ENCODE measurements at regions of chr7 and their contacts with region 1.

Region 1: GRCh38 chr7:92833024-92833765 is 3.2 kb downstream of the CDK6 start:
- DNase-seq: peak; percentile 58 to 90
- ATAC-seq: peak; percentile 72 to 82
- H3K4me3 ChIP-seq: peak overlapping the region; percentile 80
- H3K27ac ChIP-seq: peak overlapping the region; percentile 92 to 96
- H3K4me1 ChIP-seq: peaks cover 33% of the 10 kb centered on the region
- CTCF ChIP-seq: peak; percentile 80
- EP300 ChIP-seq: no peak
- POLR2A ChIP-seq: no peak
- RAD21 ChIP-seq: peak; percentile 82 to 92

Region 2: DNA sequence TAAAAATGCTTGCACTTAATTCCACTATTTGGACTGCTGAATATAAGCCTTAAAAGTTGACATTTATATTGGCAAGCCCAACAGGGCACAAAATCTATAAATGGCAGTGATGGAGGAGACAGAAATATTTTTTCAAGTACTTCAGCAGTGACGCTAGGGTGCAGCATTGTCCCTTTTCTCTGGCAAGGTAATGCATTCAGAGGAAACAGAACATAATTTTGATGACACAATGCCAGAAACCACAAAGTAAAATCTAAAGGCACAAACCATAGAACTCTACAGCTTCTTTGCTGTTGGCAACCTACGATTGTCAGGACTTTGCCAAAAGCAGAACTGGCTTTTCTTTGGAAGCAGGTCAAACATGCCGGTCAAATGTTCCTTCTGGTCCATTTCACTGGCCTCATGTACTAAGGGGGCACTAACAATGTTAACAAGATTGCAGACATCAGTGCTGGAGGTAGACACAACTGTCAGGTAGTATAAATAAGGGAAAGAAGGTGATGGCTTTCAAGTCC is 212.1 kb before region 1 on chr7:
- CTCF ChIA-PET with region 1: interaction called, 62 read pairs
- POLR2A ChIA-PET with region 1: no interaction called
- DNase-seq: peak; percentile 36 to 85
- ATAC-seq: peak; percentile 87 to 92
- H3K4me3 ChIP-seq: no peak overlapping the region
- H3K27ac ChIP-seq: peak overlapping the region; percentile 50 to 78
- H3K4me1 ChIP-seq: peaks cover 28% of the 10 kb centered on the region
- CTCF ChIP-seq: peak; percentile 84
- EP300 ChIP-seq: no peak
- POLR2A ChIP-seq: no peak
- RAD21 ChIP-seq: peak; percentile 94 to 95

Region 3: GRCh38 chr7:92691578-92691977 is 141.6 kb before region 1 on chr7:
- CTCF ChIA-PET with region 1: interaction called, 74 read pairs
- POLR2A ChIA-PET with region 1: interaction called, 24 read pairs
- DNase-seq: peak; percentile 38 to 69
- ATAC-seq: peak; percentile 60 to 74; a peak in 4 of 6 replicates
- H3K4me3 ChIP-seq: no peak overlapping the region
- H3K27ac ChIP-seq: peak overlapping the region; percentile 54 to 78
- H3K4me1 ChIP-seq: peaks cover 32% of the 10 kb centered on the region
- CTCF ChIP-seq: peak; percentile 72
- EP300 ChIP-seq: no peak
- POLR2A ChIP-seq: no peak
- RAD21 ChIP-seq: peak; percentile 77 to 81

Region 4: DNA sequence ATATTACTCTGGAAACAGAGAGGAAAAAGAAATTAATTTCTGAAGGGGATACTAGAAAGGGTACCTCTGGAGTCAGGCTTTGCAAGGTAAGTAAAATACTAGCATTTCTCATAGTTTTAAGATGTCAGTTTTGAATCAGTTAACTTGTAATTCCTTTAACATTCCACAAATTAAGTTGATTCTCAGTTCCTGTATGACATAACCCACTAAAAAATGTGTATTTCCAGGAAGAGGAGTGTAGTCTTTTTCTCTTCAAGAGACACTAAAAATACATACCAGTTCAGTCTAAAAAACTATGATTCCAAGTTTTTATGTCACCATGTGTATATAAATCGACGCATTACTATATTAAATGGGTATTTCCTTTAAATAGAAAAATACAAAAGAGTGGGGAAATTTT is 110.0 kb before region 1 on chr7:
- CTCF ChIA-PET with region 1: interaction called, 12 read pairs
- POLR2A ChIA-PET with region 1: no interaction called
- DNase-seq: no peak
- ATAC-seq: no peak
- H3K4me3 ChIP-seq: no peak overlapping the region
- H3K27ac ChIP-seq: peak overlapping the region in 1 of 2 experiments; percentile 67; a peak in 3 of 6 replicates
- H3K4me1 ChIP-seq: peaks cover 29% of the 10 kb centered on the region
- CTCF ChIP-seq: no peak
- EP300 ChIP-seq: no peak
- POLR2A ChIP-seq: no peak
- RAD21 ChIP-seq: no peak

Region 5: DNA sequence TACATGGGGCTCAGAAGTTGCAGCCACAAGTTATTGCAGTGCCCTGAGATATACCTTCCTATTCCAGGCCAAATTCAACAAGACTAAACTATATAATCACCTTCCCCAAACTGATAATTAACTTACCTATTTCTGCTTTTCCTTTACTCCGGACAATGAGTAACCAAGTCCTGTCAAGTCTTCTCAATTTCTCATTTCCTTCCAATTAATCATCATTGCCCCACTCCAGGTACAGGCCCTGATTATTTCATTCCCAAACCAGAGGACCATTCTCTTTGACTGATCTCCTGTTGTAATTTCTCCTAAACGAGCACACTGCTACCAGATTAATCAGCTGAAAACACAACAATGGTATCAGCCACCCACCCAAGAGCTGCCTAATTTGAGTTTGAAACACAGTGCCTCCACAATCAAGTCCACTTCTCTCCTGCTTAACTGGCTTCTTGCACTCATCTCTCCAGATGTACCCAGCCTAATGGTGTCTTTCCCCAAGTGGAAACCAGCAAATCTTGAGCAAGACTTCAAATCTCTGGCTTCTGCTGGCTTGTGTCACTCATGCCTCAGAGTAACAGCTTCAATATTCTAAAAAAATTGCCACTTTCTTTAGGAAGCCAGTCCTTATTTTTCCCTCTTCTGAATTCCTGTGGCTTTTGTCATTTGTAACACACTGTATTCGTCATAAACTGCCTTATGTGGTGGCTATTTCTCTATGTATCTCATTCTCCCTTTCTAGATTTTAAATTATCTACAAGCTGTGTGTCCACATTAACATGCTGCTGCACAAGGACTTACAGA is 86.0 kb before region 1 on chr7:
- CTCF ChIA-PET with region 1: interaction called, 20 read pairs
- POLR2A ChIA-PET with region 1: interaction called, 3 read pairs
- DNase-seq: no peak
- ATAC-seq: no peak
- H3K4me3 ChIP-seq: no peak overlapping the region
- H3K27ac ChIP-seq: peak overlapping the region; percentile 88 to 89
- H3K4me1 ChIP-seq: peaks cover 68% of the 10 kb centered on the region
- CTCF ChIP-seq: no peak
- EP300 ChIP-seq: no peak
- POLR2A ChIP-seq: no peak
- RAD21 ChIP-seq: no peak

Region 6: GRCh38 chr7:92768501-92769393 is 64.4 kb before region 1 on chr7:
- CTCF ChIA-PET with region 1: interaction called, 39 read pairs
- POLR2A ChIA-PET with region 1: interaction called, 12 read pairs
- DNase-seq: no peak
- ATAC-seq: peak in 1 of 2 experiments; percentile 10; a peak in 1 of 6 replicates
- H3K4me3 ChIP-seq: no peak overlapping the region
- H3K27ac ChIP-seq: peak overlapping the region; percentile 82 to 84
- H3K4me1 ChIP-seq: peaks cover 85% of the 10 kb centered on the region
- CTCF ChIP-seq: no peak
- EP300 ChIP-seq: no peak
- POLR2A ChIP-seq: no peak
- RAD21 ChIP-seq: no peak

Region 7: GRCh38 chr7:92843034-92843760 is 10.0 kb after region 1 on chr7:
- CTCF ChIA-PET with region 1: interaction called, 13 read pairs
- POLR2A ChIA-PET with region 1: no interaction called
- DNase-seq: no peak
- ATAC-seq: no peak
- H3K4me3 ChIP-seq: no peak overlapping the region
- H3K27ac ChIP-seq: no peak overlapping the region
- H3K4me1 ChIP-seq: no peaks in the 10 kb centered on the region
- CTCF ChIP-seq: no peak
- EP300 ChIP-seq: no peak
- POLR2A ChIP-seq: no peak
- RAD21 ChIP-seq: no peak

Region 8: GRCh38 chr7:92953657-92954056 is 120.5 kb after region 1 on chr7:
- CTCF ChIA-PET with region 1: no interaction called
- POLR2A ChIA-PET with region 1: no interaction called
- DNase-seq: peak in 1 of 2 experiments; percentile 13
- ATAC-seq: peak; percentile 23 to 56; a peak in 2 of 6 replicates
- H3K4me3 ChIP-seq: no peak overlapping the region
- H3K27ac ChIP-seq: no peak overlapping the region
- H3K4me1 ChIP-seq: no peaks in the 10 kb centered on the region
- CTCF ChIP-seq: no peak
- EP300 ChIP-seq: no peak
- POLR2A ChIP-seq: no peak
- RAD21 ChIP-seq: no peak